ENCODE measurements at regions of chr11 and their contacts with region 1.

Region 1: DNA sequence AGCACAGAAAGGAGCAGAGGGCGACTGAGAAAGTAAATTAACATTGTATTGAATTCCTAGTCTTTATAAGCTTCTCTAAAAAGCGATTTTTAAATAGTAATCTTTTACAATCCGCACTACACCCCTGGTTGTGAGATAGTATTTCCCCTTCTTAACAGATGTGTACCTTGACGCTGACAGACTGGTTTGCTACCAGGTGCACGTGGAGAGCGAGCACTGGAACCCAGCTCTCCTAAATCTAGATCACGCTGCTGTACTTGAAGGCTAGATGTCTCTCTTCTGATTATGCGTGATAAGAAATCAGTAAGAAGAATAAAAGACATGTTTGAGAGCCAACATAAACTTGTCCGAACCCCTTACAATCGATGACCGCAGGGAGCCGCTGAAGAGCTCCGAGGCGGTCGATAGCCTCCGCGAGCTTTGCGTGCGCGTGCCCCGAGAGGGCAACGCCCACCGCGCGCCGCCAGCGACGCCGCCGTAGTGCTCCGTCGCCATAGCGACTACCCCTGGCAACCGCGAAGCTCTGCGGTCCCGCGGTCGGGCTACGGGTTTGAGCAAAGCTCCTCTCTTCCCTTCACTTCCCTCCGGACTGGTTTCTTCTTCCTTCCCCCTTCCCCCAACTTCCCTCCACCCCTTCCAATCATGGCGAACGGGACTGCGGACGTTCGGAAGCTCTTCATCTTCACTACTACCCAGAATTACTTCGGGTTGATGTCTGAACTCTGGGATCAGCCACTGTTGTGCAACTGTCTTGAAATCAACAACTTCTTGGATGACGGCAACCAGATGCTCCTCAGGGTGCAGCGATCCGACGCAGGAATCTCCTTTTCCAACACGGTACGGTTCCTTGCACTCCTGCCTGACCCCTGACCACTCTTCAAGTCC is at the start of gene DYNC2H1:
- DNase-seq: peak; percentile 88 to 90 (median 90)
- H3K4me3 ChIP-seq: peak within 1 kb of the TSS; percentile 70 to 99
- H3K4me3 Mint-ChIP-seq: peak within 1 kb of the TSS; percentile 92 to 100 (median 98)
- H3K27ac ChIP-seq: peak within 1 kb of the TSS; percentile 62
- H3K27ac Mint-ChIP-seq: peak within 1 kb of the TSS; percentile 94 to 100 (median 98)
- H3K4me1 ChIP-seq: no peaks in the 10 kb centered on the region
- H3K4me1 Mint-ChIP-seq: peaks cover 2 to 14% (median 11%) of the 10 kb centered on the region in 4 donors
- H3K27me3 ChIP-seq: no peaks in the 10 kb centered on the region
- H3K27me3 Mint-ChIP-seq: peaks cover 5 to 7% of the 10 kb centered on the region in 2 donors
- total RNA-seq, gene DYNC2H1: 3.9 to 4.2 TPM

Region 2: GRCh38 chr11:103035791-103036434 is 73.3 kb before region 1 on chr11:
- CTCF ChIA-PET with region 1: interaction called, 15 read pairs
- POLR2A ChIA-PET with region 1: interaction called, 4 read pairs
- intact Hi-C with region 1: loop called (anchors 1 kb)
- DNase-seq: peak; percentile 54 to 74 (median 64)
- H3K4me3 ChIP-seq: no peak overlapping the region
- H3K4me3 Mint-ChIP-seq: peak overlapping the region in 4 of 8 donors; percentile 9 to 43 (median 27)
- H3K27ac ChIP-seq: no peak overlapping the region
- H3K27ac Mint-ChIP-seq: peak overlapping the region in 6 of 7 donors; percentile 12 to 81 (median 38)
- H3K4me1 ChIP-seq: peaks cover 8% of the 10 kb centered on the region
- H3K4me1 Mint-ChIP-seq: peaks cover 6 to 8% (median 6%) of the 10 kb centered on the region in 4 donors
- H3K27me3 ChIP-seq: no peaks in the 10 kb centered on the region
- H3K27me3 Mint-ChIP-seq: peaks cover 0 to 2% of the 10 kb centered on the region in 2 donors

Region 3: DNA sequence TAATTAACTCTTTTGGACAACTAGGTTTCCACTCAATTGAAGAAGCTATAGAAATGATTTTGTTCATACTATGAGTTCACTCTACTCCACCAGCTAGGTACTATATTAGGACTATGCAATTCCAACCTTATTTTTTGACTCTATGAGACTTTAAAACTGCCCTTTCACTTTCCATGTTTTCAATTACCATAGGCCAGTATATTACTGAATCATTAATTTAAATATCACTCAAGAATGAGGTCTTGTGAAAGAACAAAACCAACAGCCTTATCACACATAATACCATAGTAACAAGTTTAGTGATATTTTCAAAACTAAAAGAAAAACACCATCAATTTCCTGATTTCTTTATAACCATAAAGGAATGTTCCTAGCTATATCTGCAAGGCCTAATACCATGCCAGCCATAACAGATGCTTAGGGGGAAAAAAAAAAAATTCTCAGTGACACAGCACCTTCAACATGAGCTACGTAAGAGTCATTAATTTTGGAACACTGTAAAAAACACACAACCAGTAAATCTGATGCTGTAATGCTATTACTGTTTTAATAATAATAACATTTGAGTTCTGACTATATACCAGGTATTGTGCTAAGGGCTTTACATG is 23.3 kb before region 1 on chr11:
- CTCF ChIA-PET with region 1: interaction called, 49 read pairs
- POLR2A ChIA-PET with region 1: interaction called, 74 read pairs
- intact Hi-C with region 1: no loop called
- DNase-seq: no peak
- H3K4me3 ChIP-seq: no peak overlapping the region
- H3K4me3 Mint-ChIP-seq: no peak overlapping the region
- H3K27ac ChIP-seq: no peak overlapping the region
- H3K27ac Mint-ChIP-seq: peak overlapping the region in 1 of 7 donors; percentile 80
- H3K4me1 ChIP-seq: peaks cover 25% of the 10 kb centered on the region
- H3K4me1 Mint-ChIP-seq: peaks cover 14 to 24% (median 21%) of the 10 kb centered on the region in 4 donors
- H3K27me3 ChIP-seq: no peaks in the 10 kb centered on the region
- H3K27me3 Mint-ChIP-seq: no peaks in the 10 kb centered on the region

Region 4: GRCh38 chr11:103091801-103092524 is 17.2 kb before region 1 on chr11 and contains the start of gene DCUN1D5:
- CTCF ChIA-PET with region 1: interaction called, 49 read pairs
- POLR2A ChIA-PET with region 1: interaction called, 74 read pairs
- intact Hi-C with region 1: loop called (anchors 1 kb)
- DNase-seq: peak; percentile 92 to 95 (median 93)
- H3K4me3 ChIP-seq: peak within 1 kb of the TSS; percentile 47 to 58
- H3K4me3 Mint-ChIP-seq: peak within 1 kb of the TSS; percentile 86 to 97 (median 94)
- H3K27ac ChIP-seq: peak within 1 kb of the TSS; percentile 79
- H3K27ac Mint-ChIP-seq: peak within 1 kb of the TSS; percentile 92 to 99 (median 97)
- H3K4me1 ChIP-seq: peaks cover 36% of the 10 kb centered on the region
- H3K4me1 Mint-ChIP-seq: peaks cover 13 to 29% (median 25%) of the 10 kb centered on the region in 4 donors
- H3K27me3 ChIP-seq: no peaks in the 10 kb centered on the region
- H3K27me3 Mint-ChIP-seq: peaks cover 13 to 18% of the 10 kb centered on the region in 2 donors
- total RNA-seq, gene DCUN1D5: 14.4 TPM

Region 5: GRCh38 chr11:103097279-103097678 is 11.9 kb before region 1 on chr11:
- CTCF ChIA-PET with region 1: interaction called, 49 read pairs
- POLR2A ChIA-PET with region 1: interaction called, 74 read pairs
- intact Hi-C with region 1: loop called (anchors 1 kb)
- DNase-seq: no peak
- H3K4me3 ChIP-seq: no peak overlapping the region
- H3K4me3 Mint-ChIP-seq: no peak overlapping the region
- H3K27ac ChIP-seq: no peak overlapping the region
- H3K27ac Mint-ChIP-seq: no peak overlapping the region
- H3K4me1 ChIP-seq: peaks cover 7% of the 10 kb centered on the region
- H3K4me1 Mint-ChIP-seq: peaks cover 0 to 6% (median 4%) of the 10 kb centered on the region in 4 donors
- H3K27me3 ChIP-seq: no peaks in the 10 kb centered on the region
- H3K27me3 Mint-ChIP-seq: peaks cover 21 to 30% of the 10 kb centered on the region in 2 donors

Region 6: DNA sequence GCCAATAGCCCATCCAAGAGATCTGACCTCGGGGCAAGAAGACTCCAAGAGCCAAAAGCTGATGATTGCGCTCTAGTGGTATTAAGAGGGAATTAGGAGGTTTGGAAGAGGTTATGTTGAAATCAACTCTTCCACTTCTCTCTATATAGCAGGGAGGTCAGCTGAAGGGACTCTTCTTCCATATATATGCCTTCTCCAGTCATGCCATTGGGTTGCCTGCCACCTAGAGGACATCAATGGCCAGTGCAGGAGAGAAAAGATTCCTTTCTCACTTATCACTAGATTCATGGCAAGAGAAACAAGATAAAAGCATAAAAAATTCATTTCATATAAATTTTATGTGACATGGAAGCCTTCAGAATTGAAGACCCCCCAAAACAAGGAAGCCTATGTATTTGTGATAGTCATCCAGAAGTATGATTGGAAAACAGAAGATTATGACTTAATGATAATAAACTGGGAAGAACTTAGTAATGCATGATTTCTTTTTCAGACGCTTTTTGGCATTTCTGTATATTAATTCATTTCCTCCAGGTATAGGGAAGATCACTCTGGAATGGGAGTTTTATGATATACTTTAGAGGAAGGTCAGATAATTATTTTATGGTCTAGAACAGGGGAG is 492.2 kb after region 1 on chr11:
- CTCF ChIA-PET with region 1: interaction called, 3 read pairs
- POLR2A ChIA-PET with region 1: interaction called, 3 read pairs
- intact Hi-C with region 1: loop called (anchors 1 kb)
- DNase-seq: peak in 4 of 5 donors; percentile 8 to 18 (median 10)
- H3K4me3 ChIP-seq: no peak overlapping the region
- H3K4me3 Mint-ChIP-seq: no peak overlapping the region
- H3K27ac ChIP-seq: no peak overlapping the region
- H3K27ac Mint-ChIP-seq: no peak overlapping the region
- H3K4me1 ChIP-seq: no peaks in the 10 kb centered on the region
- H3K4me1 Mint-ChIP-seq: no peaks in the 10 kb centered on the region
- H3K27me3 ChIP-seq: no peaks in the 10 kb centered on the region
- H3K27me3 Mint-ChIP-seq: peaks cover 6% of the 10 kb centered on the region in 2 donors